AG04450 (cell line): ENCODE measurements at regions of chr2 and their contacts with region 1.

Region 1: GRCh38 chr2:64644177-64645004 is 9.3 kb downstream of the SERTAD2 start:
- DNase-seq: no peak
- H3K4me3 ChIP-seq: peak overlapping the region; percentile 62
- H3K27ac ChIP-seq: peak overlapping the region; percentile 96
- H3K27me3 ChIP-seq: no peaks in the 10 kb centered on the region
- CTCF ChIP-seq: no peak

Region 2: DNA sequence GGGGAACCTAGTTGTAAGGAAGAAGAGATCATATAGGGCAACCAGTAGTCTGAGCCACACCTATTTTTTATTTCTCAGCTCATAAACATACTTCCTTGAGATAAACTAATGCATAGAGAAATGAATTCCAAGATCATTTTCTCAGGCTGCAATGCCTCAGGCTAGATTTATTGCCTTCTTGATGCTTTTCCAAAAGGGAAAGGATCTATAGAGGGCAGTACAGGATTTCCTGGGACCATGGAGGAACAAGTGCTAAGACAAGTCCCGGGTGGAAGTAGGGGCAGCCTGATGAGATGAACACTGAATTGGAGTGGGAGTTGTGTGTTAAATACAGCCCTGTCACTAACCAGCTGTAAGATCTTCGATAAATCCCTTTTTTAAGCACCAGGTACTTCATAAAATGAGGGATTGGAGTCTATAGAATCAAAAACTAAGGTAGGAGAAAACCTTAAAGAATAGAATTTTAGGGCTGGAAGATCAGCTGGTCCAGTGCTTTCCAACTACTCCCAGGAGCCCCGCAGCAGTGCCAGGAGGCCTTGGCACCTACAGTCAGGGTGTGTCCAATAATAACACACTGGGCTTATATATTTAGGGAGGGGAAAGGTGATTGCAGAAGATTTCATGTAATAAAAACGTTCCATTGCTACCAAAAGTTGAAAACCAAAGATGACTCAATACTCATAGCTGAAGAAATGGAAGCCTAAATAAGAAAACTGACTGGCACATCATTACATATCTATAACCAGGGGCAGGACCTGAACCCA is 48.8 kb before region 1 on chr2:
- CTCF ChIA-PET with region 1: interaction called, 15 read pairs
- POLR2A ChIA-PET with region 1: interaction called, 4 read pairs
- DNase-seq: no peak
- H3K4me3 ChIP-seq: no peak overlapping the region
- H3K27ac ChIP-seq: no peak overlapping the region
- H3K27me3 ChIP-seq: peaks cover 30% of the 10 kb centered on the region
- CTCF ChIP-seq: peak; percentile 49

Region 3: GRCh38 chr2:64661741-64662169 is 17.4 kb after region 1 on chr2:
- CTCF ChIA-PET with region 1: interaction called, 25 read pairs
- POLR2A ChIA-PET with region 1: no interaction called
- DNase-seq: no peak
- H3K4me3 ChIP-seq: no peak overlapping the region
- H3K27ac ChIP-seq: no peak overlapping the region
- H3K27me3 ChIP-seq: no peaks in the 10 kb centered on the region
- CTCF ChIP-seq: no peak

Region 4: GRCh38 chr2:64727013-64727767 is 82.8 kb after region 1 on chr2:
- CTCF ChIA-PET with region 1: interaction called, 11 read pairs
- POLR2A ChIA-PET with region 1: no interaction called
- DNase-seq: no peak
- H3K4me3 ChIP-seq: no peak overlapping the region
- H3K27ac ChIP-seq: no peak overlapping the region
- H3K27me3 ChIP-seq: no peaks in the 10 kb centered on the region
- CTCF ChIP-seq: no peak

Region 5: GRCh38 chr2:64859312-64860212 is 215.2 kb after region 1 on chr2:
- CTCF ChIA-PET with region 1: interaction called, 27 read pairs
- POLR2A ChIA-PET with region 1: interaction called, 14 read pairs
- DNase-seq: peak; percentile 78
- H3K4me3 ChIP-seq: peak overlapping the region; percentile 44
- H3K27ac ChIP-seq: peak overlapping the region; percentile 92
- H3K27me3 ChIP-seq: peaks cover 5% of the 10 kb centered on the region
- CTCF ChIP-seq: no peak

Region 6: GRCh38 chr2:64873472-64873924 is 229.1 kb after region 1 on chr2:
- CTCF ChIA-PET with region 1: interaction called, 44 read pairs
- POLR2A ChIA-PET with region 1: no interaction called
- DNase-seq: no peak
- H3K4me3 ChIP-seq: 0 out of 2 replicates have a peak overlapping the region, but pooled peaks have one; percentile 10
- H3K27ac ChIP-seq: no peak overlapping the region
- H3K27me3 ChIP-seq: peaks cover 36% of the 10 kb centered on the region
- CTCF ChIP-seq: peak; percentile 92